ENCODE measurements at regions of chr1 and their contacts with region 1.

Region 1: DNA sequence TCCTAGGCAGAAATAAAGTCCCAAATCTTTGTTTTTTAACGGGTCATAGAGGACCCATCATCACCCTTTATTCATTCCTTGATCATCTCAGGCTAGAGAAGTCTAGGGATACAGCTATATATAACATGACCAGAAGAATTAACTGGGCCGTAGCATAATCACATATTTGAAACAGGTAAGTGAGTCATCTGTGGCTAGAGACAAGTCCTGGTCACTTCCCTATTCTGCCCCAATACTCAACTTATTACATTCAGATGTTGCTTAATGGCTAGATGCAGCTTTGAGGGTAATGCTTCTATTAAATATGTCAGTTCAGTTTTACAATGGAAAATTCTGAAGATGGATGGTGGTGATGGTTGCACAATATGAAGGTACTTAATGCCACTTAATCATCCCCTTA is 47.0 kb downstream of the EXO1 start:
- DNase-seq: peak in 2 of 3 donors; percentile 26 to 54
- H3K4me3 ChIP-seq: no peak overlapping the region
- H3K4me3 Mint-ChIP-seq: no peak overlapping the region
- H3K27ac ChIP-seq: no peak overlapping the region
- H3K27ac Mint-ChIP-seq: peak overlapping the region in 1 of 7 donors; percentile 48
- H3K4me1 ChIP-seq: peaks cover 14 to 15% of the 10 kb centered on the region in 2 donors
- H3K4me1 Mint-ChIP-seq: peaks cover 10% of the 10 kb centered on the region
- H3K27me3 ChIP-seq: no peaks in the 10 kb centered on the region
- H3K27me3 Mint-ChIP-seq: peaks cover 0 to 1% (median 0%) of the 10 kb centered on the region in 3 donors
- CTCF ChIP-seq: no peak

Region 2: GRCh38 chr1:241834733-241835377 is 60.2 kb before region 1 on chr1:
- intact Hi-C with region 1: no loop called
- DNase-seq: peak in 1 of 3 donors; percentile 29
- H3K4me3 ChIP-seq: no peak overlapping the region
- H3K4me3 Mint-ChIP-seq: no peak overlapping the region
- H3K27ac ChIP-seq: no peak overlapping the region
- H3K27ac Mint-ChIP-seq: no peak overlapping the region
- H3K4me1 ChIP-seq: no peaks in the 10 kb centered on the region
- H3K4me1 Mint-ChIP-seq: peaks cover 3% of the 10 kb centered on the region
- H3K27me3 ChIP-seq: peaks cover 0 to 3% of the 10 kb centered on the region in 2 donors
- H3K27me3 Mint-ChIP-seq: peaks cover 0 to 6% (median 0%) of the 10 kb centered on the region in 3 donors
- CTCF ChIP-seq: peak; percentile 71

Region 3: DNA sequence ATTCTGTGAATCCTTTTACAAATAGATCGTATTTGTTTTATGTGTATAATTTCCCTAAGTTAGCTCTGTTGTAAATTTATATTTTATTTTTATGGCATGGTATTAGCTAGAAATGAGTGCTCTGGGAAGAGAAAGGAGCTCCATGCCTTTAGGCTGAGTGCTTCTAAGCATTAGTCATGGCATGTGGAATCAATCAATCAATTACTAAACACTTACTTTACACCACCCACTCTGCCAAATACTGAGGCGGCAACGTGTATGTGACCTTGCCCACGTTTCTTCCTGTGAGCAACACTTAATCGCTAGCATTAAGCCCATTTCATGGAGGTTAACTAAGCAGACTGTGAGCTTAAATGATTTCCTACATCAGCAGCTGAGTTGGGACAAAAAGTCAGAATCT is 55.4 kb after region 1 on chr1:
- intact Hi-C with region 1: no loop called
- DNase-seq: no peak
- H3K4me3 ChIP-seq: no peak overlapping the region
- H3K4me3 Mint-ChIP-seq: no peak overlapping the region
- H3K27ac ChIP-seq: no peak overlapping the region
- H3K27ac Mint-ChIP-seq: no peak overlapping the region
- H3K4me1 ChIP-seq: no peaks in the 10 kb centered on the region
- H3K4me1 Mint-ChIP-seq: no peaks in the 10 kb centered on the region
- H3K27me3 ChIP-seq: no peaks in the 10 kb centered on the region
- H3K27me3 Mint-ChIP-seq: peaks cover 1 to 6% (median 3%) of the 10 kb centered on the region in 3 donors
- CTCF ChIP-seq: no peak

Region 4: GRCh38 chr1:241998412-241998921 is 103.5 kb after region 1 on chr1:
- intact Hi-C with region 1: loop called in 1 of 2 experiments (anchors 10 kb)
- DNase-seq: peak; percentile 44 to 79 (median 48)
- H3K4me3 ChIP-seq: peak overlapping the region; percentile 2 to 77 (median 22)
- H3K4me3 Mint-ChIP-seq: peak overlapping the region; percentile 70 to 91
- H3K27ac ChIP-seq: no peak overlapping the region
- H3K27ac Mint-ChIP-seq: peak overlapping the region in 5 of 7 donors; percentile 50 to 73 (median 61)
- H3K4me1 ChIP-seq: peaks cover 0 to 7% of the 10 kb centered on the region in 2 donors
- H3K4me1 Mint-ChIP-seq: peaks cover 6% of the 10 kb centered on the region
- H3K27me3 ChIP-seq: peaks cover 0 to 5% of the 10 kb centered on the region in 2 donors
- H3K27me3 Mint-ChIP-seq: peaks cover 6 to 15% (median 11%) of the 10 kb centered on the region in 3 donors
- CTCF ChIP-seq: peak; percentile 82

Measured in CD14-positive monocyte (primary cell).